Lower leg skin (tissue), 4 donors: ENCODE measurements at regions of chr16 and their contacts with region 1.

Region 1: GRCh38 chr16:58733671-58734458 is at the start of gene GOT2:
- DNase-seq: peak; percentile 60 to 95
- H3K4me3 ChIP-seq: peak within 1 kb of the TSS; percentile 94
- CTCF ChIP-seq: no peak
- POLR2A ChIP-seq: no peak
- total RNA-seq, gene GOT2: 47.5 to 63.6 (median 57.6) TPM

Region 2: GRCh38 chr16:58336332-58337089 is 397.4 kb before region 1 on chr16:
- intact Hi-C with region 1: loop called (anchors 10 kb)
- DNase-seq: peak; percentile 75 to 97
- H3K4me3 ChIP-seq: no peak overlapping the region
- CTCF ChIP-seq: peak in 1 of 3 donors; percentile 55
- POLR2A ChIP-seq: no peak